PC-3 (cell line): ENCODE measurements at regions of chr3 and their contacts with region 1.

Region 1: GRCh38 chr3:94772402-94772801 is 709.5 kb downstream of the NSUN3 start:
- DNase-seq: peak; percentile 84
- ATAC-seq: peak; percentile 91
- H3K4me3 ChIP-seq: no peak overlapping the region
- H3K27ac ChIP-seq: peak overlapping the region; percentile 51
- H3K4me1 ChIP-seq: peaks cover 11% of the 10 kb centered on the region; the same call in 1 of the 2 replicates
- H3K27me3 ChIP-seq: no peaks in the 10 kb centered on the region
- CTCF ChIP-seq: no peak

Region 2: DNA sequence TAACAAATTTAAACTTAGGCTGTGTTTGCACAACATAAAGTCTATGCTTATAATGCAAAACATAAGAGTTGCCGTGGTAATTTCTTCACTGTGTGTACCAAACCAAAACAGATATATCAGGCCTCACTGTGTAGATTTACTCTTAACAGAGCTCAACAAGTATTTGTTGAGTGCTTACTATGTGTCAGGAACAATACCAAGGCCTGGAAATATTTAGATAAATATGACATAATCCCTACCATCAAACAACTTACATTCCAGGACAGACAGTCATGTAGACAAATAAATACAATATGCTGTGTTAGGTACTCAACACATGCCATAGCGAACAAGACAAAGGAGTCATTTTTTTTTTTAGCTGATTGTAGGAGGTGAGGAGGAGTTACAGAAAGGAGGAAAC is 155.6 kb before region 1 on chr3:
- CTCF ChIA-PET with region 1: no interaction called
- POLR2A ChIA-PET with region 1: interaction called, 4 read pairs
- intact Hi-C with region 1: loop called (anchors 5 kb)
- DNase-seq: peak; percentile 72
- ATAC-seq: peak; percentile 98
- H3K4me3 ChIP-seq: no peak overlapping the region
- H3K27ac ChIP-seq: 0 out of 2 replicates have a peak overlapping the region, but pooled peaks have one; percentile 5
- H3K4me1 ChIP-seq: peaks cover 16% of the 10 kb centered on the region; the same call in 1 of the 2 replicates
- H3K27me3 ChIP-seq: no peaks in the 10 kb centered on the region
- CTCF ChIP-seq: no peak

Region 3: DNA sequence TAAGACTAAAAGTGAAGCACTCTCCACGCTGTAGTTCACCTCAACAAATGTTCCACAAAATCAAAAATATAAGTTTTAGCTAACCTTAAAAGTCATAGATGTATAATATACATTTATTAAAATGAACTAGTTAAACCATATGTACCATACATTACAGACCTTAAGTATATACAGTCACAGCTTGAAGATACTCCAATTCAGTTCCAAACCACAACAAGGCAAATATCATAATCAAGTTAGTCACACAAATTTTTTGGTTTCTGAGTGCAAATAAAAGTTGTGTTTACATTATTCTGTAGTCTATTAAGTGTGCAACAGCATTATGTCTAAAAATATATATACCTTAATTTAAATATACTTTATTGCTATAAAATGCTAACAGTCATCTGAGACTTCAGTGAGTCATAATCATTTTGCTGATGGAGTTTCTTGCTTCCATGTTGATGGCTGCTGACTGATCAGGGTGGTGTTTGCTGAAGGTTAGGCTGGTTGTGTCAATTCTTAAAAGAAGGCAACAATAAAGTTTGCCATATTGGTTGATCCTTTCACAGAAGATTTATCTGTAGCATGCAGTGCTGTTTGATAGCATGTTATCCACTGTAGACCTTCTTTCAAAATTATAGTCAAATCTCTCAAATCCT is 27.1 kb after region 1 on chr3:
- CTCF ChIA-PET with region 1: no interaction called
- POLR2A ChIA-PET with region 1: no interaction called
- intact Hi-C with region 1: loop called (anchors 1 kb)
- DNase-seq: peak; percentile 75
- ATAC-seq: peak; percentile 94
- H3K4me3 ChIP-seq: no peak overlapping the region
- H3K27ac ChIP-seq: peak overlapping the region; percentile 47
- H3K4me1 ChIP-seq: peaks cover 11% of the 10 kb centered on the region
- H3K27me3 ChIP-seq: no peaks in the 10 kb centered on the region
- CTCF ChIP-seq: no peak

Region 4: DNA sequence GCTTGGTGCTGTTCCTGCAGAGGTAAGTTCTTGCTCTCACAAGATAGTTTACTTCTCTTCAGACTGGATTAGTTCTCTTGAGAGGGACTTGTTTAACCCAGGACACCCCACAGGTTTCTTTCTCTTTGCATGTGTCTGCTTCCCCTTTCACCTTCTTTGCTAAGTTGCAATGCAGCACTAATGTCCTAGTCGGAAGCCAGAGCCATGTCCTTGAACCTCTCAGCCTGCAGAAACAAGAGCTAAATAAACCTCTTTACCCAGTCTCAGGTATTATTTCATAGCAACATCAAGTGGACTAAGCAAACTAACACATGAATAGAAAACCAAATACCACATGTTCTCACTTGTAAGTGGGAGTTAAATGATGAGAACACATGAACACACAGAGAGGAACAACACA is 205.7 kb after region 1 on chr3:
- CTCF ChIA-PET with region 1: no interaction called
- POLR2A ChIA-PET with region 1: no interaction called
- intact Hi-C with region 1: no loop called
- DNase-seq: no peak
- ATAC-seq: no peak
- H3K4me3 ChIP-seq: no peak overlapping the region
- H3K27ac ChIP-seq: no peak overlapping the region
- H3K4me1 ChIP-seq: no peaks in the 10 kb centered on the region
- H3K27me3 ChIP-seq: no peaks in the 10 kb centered on the region
- CTCF ChIP-seq: no peak